B cell (primary cell): ENCODE measurements at regions of chr1 and their contacts with region 1.

Region 1: DNA sequence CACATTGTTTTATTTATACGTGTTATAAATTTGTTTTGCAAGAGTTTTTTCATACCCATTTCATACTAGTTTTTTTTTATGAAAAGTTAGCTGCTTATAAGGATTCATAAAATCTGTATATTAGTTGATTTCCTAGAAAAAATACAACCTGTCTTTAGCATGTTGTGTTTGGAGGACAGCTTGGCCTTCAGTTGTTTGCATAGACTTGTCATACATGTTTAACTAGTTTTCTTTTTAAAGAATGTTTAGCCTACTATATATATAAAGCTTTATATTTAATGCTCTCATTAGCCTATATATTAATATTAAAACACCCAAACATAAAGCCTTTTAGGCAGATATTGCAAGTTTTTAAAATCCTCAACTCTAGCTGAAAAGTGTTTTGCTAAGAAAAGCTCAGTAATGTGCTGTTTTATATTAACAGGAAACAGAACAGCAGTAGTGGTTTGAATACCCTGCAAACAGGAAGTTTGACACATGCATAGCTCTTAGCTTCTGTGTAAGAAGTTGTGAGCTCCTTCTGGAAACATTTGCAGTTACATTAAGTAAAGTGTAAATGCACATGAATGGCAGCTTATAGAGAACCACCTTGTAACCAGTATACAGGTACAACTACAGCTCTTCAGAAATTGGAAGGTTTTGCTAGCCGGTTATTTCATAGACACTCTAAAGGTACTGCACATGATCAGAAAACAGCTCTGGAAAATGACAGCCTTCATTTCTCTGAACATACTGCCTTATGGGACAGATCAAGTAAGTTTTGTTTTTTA is at the start of gene PRKACB:
- DNase-seq: peak; percentile 65
- ATAC-seq: peak; percentile 86
- H3K4me3 ChIP-seq: peak within 1 kb of the TSS; percentile 46 to 85 (median 63)
- H3K4me3 Mint-ChIP-seq: peak within 1 kb of the TSS; percentile 91
- H3K27ac ChIP-seq: peak within 1 kb of the TSS; percentile 74 to 92
- H3K27ac Mint-ChIP-seq: peak within 1 kb of the TSS; percentile 95
- H3K4me1 ChIP-seq: peaks cover 2 to 38% of the 10 kb centered on the region in 2 donors
- H3K4me1 Mint-ChIP-seq: peaks cover 42% of the 10 kb centered on the region
- H3K27me3 ChIP-seq: no peaks in the 10 kb centered on the region
- H3K27me3 Mint-ChIP-seq: no peaks in the 10 kb centered on the region
- CTCF ChIP-seq: no peak
- total RNA-seq, gene PRKACB: 53.9 and 54.9 TPM in 2 replicates

Region 2: GRCh38 chr1:84156210-84156621 is 12.2 kb after region 1 on chr1:
- CTCF ChIA-PET with region 1: interaction called, 11 read pairs
- POLR2A ChIA-PET with region 1: no interaction called
- intact Hi-C with region 1: loop called (anchors 2 kb)
- DNase-seq: no peak
- ATAC-seq: peak; percentile 31
- H3K4me3 ChIP-seq: no peak overlapping the region
- H3K4me3 Mint-ChIP-seq: no peak overlapping the region
- H3K27ac ChIP-seq: no peak overlapping the region
- H3K27ac Mint-ChIP-seq: peak overlapping the region; percentile 28
- H3K4me1 ChIP-seq: peaks cover 28 to 40% of the 10 kb centered on the region in 2 donors
- H3K4me1 Mint-ChIP-seq: peaks cover 74% of the 10 kb centered on the region
- H3K27me3 ChIP-seq: no peaks in the 10 kb centered on the region
- H3K27me3 Mint-ChIP-seq: no peaks in the 10 kb centered on the region
- CTCF ChIP-seq: no peak

Region 3: DNA sequence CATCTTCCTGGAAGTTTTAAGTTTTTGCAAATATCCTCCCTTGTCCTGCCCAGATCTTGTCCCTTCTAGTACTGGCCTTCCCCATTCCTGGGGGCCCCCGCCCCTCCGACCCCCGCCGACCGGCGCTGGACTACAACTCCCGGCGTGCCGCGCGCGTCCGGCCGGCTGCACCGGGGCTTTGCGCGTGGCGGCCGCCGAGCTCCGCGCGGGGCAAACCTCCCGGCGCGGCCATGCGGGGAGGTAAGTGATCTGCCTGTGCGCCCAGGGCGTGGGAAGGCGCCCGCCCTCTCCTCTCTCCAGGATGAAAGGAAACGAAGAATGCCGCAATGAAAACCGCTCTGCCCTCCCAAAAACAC is 154.3 kb after region 1 on chr1:
- CTCF ChIA-PET with region 1: interaction called, 6 read pairs
- POLR2A ChIA-PET with region 1: interaction called, 4 read pairs
- intact Hi-C with region 1: loop called (anchors 5 kb)
- DNase-seq: no peak
- ATAC-seq: peak; percentile 87
- H3K4me3 ChIP-seq: peak overlapping the region; percentile 66 to 86 (median 84)
- H3K4me3 Mint-ChIP-seq: peak overlapping the region; percentile 94
- H3K27ac ChIP-seq: no peak overlapping the region
- H3K27ac Mint-ChIP-seq: peak overlapping the region; percentile 69
- H3K4me1 ChIP-seq: peaks cover 31 to 32% of the 10 kb centered on the region in 2 donors
- H3K4me1 Mint-ChIP-seq: peaks cover 36% of the 10 kb centered on the region
- H3K27me3 ChIP-seq: peaks cover 0 to 15% (median 9%) of the 10 kb centered on the region in 4 experiments
- H3K27me3 Mint-ChIP-seq: peaks cover 20% of the 10 kb centered on the region
- CTCF ChIP-seq: no peak

Region 4: DNA sequence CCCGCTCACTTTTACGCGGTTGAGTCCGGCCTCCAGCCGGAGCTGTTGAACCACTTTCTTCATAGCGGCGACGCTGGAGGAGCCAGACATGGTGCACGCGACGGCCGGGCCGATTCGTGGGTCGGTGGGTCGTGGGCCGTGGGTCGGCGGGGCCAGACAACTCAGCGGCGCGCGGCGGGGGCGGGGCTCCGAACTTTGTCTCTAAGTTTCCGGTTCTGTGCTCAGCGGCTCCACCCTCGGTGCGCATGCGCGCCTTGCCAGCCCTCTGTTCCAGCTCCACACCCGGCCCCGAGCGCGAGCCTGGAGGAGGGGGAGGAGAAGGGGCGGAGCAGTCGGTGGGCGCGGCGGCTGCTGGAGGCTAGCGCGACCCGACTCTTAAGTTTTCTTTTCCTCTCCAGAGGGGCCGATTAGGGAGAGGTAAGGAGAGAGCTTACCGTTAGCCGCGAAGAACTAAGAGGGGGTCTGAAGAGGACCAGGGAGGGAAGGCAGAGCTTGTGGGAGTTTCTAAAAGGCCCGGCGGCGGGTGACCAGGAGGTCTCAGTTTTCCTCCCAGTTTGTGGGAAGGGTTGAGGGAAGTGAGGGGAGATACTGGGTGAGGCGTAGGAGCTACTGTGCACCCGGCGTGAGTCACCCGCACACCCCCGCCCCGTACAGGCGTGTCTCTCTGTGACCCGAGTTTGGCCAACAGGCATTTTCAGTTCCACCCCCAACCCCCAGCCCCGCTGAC is 362.2 kb after region 1 on chr1 and contains the starts of genes GNG5 and SPATA1:
- CTCF ChIA-PET with region 1: interaction called, 4 read pairs
- POLR2A ChIA-PET with region 1: interaction called, 6 read pairs
- intact Hi-C with region 1: loop called (anchors 10 kb)
- DNase-seq: peak; percentile 98
- ATAC-seq: peak; percentile 88
- H3K4me3 ChIP-seq: peak within 1 kb of the TSS; percentile 82 to 98 (median 90)
- H3K4me3 Mint-ChIP-seq: peak within 1 kb of the TSS; percentile 95
- H3K27ac ChIP-seq: peak within 1 kb of the TSS; percentile 82 to 89
- H3K27ac Mint-ChIP-seq: peak within 1 kb of the TSS; percentile 98
- H3K4me1 ChIP-seq: peaks cover 23 to 27% of the 10 kb centered on the region in 2 donors
- H3K4me1 Mint-ChIP-seq: peaks cover 35% of the 10 kb centered on the region
- H3K27me3 ChIP-seq: no peaks in the 10 kb centered on the region
- H3K27me3 Mint-ChIP-seq: no peaks in the 10 kb centered on the region
- CTCF ChIP-seq: no peak
- total RNA-seq, gene GNG5: 36.0 and 41.6 TPM in 2 replicates
- total RNA-seq, gene SPATA1: 6.4 and 8.6 TPM in 2 replicates

Region 5: DNA sequence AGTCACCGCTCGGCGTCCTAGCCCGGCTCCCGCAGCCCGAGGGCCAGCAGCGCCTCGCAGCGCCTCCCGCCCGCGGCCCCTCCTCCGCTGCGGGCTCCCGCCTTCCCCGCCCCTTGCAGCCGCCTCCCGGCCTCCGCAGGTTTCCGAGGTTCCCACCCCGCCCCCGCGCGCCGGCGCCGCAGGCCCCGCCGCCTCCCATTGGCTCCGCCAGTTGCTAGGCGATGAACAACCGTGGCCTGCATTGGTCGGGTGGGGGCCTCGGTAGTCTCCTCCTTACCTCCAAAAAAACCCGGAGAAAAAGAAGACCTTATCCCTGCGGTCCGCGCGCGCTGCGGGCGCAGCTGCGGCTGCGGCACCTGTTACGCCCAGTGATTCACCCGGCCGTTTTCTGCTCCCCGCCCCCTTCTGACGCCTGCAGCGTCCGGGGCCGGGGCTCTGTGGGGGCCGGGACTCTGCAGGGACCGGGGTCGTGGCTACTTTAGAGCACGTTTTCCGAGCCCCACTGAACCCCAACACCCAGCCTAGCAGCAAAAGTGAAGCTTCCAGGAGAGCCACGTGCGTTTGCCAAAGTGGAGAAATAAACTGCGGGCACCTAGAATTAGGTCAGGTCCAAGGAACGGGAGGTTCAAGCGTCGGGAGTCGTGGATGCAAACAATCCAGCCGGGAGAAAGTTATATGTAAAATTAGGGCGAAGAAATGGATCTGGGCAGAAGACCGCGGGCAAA is 546.6 kb after region 1 on chr1 and contains the start of gene SSX2IP:
- CTCF ChIA-PET with region 1: interaction called, 3 read pairs
- POLR2A ChIA-PET with region 1: no interaction called
- intact Hi-C with region 1: loop called (anchors 2 kb)
- DNase-seq: peak; percentile 97
- ATAC-seq: peak; percentile 86
- H3K4me3 ChIP-seq: peak within 1 kb of the TSS; percentile 71 to 93 (median 85)
- H3K4me3 Mint-ChIP-seq: peak within 1 kb of the TSS; percentile 80
- H3K27ac ChIP-seq: peak within 1 kb of the TSS; percentile 56 to 64
- H3K27ac Mint-ChIP-seq: peak within 1 kb of the TSS; percentile 62
- H3K4me1 ChIP-seq: peaks cover 12 to 24% of the 10 kb centered on the region in 2 donors
- H3K4me1 Mint-ChIP-seq: peaks cover 27% of the 10 kb centered on the region
- H3K27me3 ChIP-seq: no peaks in the 10 kb centered on the region
- H3K27me3 Mint-ChIP-seq: no peaks in the 10 kb centered on the region
- CTCF ChIP-seq: no peak
- total RNA-seq, gene SSX2IP: 7.1 and 10.3 TPM in 2 replicates

Region 6: GRCh38 chr1:84772428-84772943 is 628.5 kb after region 1 on chr1:
- CTCF ChIA-PET with region 1: interaction called, 18 read pairs
- POLR2A ChIA-PET with region 1: no interaction called
- intact Hi-C with region 1: loop called (anchors 1 kb)
- DNase-seq: peak; percentile 73
- ATAC-seq: peak; percentile 56
- H3K4me3 ChIP-seq: no peak overlapping the region
- H3K4me3 Mint-ChIP-seq: no peak overlapping the region
- H3K27ac ChIP-seq: no peak overlapping the region
- H3K27ac Mint-ChIP-seq: no peak overlapping the region
- H3K4me1 ChIP-seq: no peaks in the 10 kb centered on the region
- H3K4me1 Mint-ChIP-seq: no peaks in the 10 kb centered on the region
- H3K27me3 ChIP-seq: peaks cover 0 to 7% (median 3%) of the 10 kb centered on the region in 4 experiments
- H3K27me3 Mint-ChIP-seq: peaks cover 18% of the 10 kb centered on the region
- CTCF ChIP-seq: peak; percentile 94